ENCODE measurements at regions of chr9 and their contacts with region 1.

Region 1: DNA sequence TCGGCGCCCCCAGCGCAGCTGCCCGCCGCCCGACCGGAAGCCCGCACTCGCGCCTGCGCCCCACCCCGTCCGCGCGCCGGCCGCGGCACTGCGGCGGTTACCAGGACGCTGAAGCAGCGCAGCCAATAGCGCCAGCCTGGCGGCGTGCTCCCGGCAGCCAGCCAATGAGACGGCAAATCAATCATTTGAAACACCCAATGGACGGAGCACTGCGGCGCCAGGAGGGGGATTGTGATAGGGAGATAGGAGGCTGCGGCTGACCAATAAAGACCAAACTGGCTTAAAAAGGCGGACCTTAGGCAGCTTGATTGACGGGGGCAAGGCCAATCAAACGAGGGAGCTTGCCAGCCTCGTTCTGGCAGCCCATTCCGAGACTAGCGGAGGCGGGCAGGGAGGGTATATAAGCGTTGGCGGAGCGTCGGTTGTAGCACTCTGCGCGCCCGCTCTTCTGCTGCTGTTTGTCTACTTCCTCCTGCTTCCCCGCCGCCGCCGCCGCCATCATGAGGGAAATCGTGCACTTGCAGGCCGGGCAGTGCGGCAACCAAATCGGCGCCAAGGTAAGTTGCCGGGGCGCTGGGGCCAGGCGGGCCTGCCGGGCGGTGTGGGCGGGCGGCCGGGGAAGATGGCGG is at the start of gene TUBB4B:
- DNase-seq: peak; percentile 99 to 100
- ATAC-seq: peak; percentile 92 to 94
- H3K4me3 ChIP-seq: peak within 1 kb of the TSS; percentile 79 to 100 (median 85)
- H3K27ac ChIP-seq: peak within 1 kb of the TSS; percentile 93 to 98 (median 97)
- H3K4me1 ChIP-seq: peaks cover 60 to 77% of the 10 kb centered on the region in 2 donors
- H3K27me3 ChIP-seq: no peaks in the 10 kb centered on the region
- CTCF ChIP-seq: peak in 1 of 5 experiments; percentile 19
- POLR2A ChIP-seq: peak; percentile 100
- total RNA-seq, gene TUBB4B: 222 to 495 (median 363) TPM

Region 2: GRCh38 chr9:137114610-137115391 is 126.2 kb before region 1 on chr9 and contains the start of gene DPP7:
- in situ Hi-C with region 1: loop called in 2 of 4 experiments (anchors 10 kb)
- intact Hi-C with region 1: no loop called
- DNase-seq: peak; percentile 53 to 67
- ATAC-seq: peak; percentile 91 to 93
- H3K4me3 ChIP-seq: peak within 1 kb of the TSS; percentile 76 to 97 (median 92)
- H3K27ac ChIP-seq: peak within 1 kb of the TSS; percentile 50 to 72 (median 64)
- H3K4me1 ChIP-seq: peaks cover 6 to 9% of the 10 kb centered on the region in 2 donors
- H3K27me3 ChIP-seq: no peaks in the 10 kb centered on the region
- CTCF ChIP-seq: peak in 1 of 5 experiments; percentile 22
- POLR2A ChIP-seq: peak; percentile 51 to 52
- total RNA-seq, gene DPP7: 36.9 to 63.1 (median 55.9) TPM

Region 3: DNA sequence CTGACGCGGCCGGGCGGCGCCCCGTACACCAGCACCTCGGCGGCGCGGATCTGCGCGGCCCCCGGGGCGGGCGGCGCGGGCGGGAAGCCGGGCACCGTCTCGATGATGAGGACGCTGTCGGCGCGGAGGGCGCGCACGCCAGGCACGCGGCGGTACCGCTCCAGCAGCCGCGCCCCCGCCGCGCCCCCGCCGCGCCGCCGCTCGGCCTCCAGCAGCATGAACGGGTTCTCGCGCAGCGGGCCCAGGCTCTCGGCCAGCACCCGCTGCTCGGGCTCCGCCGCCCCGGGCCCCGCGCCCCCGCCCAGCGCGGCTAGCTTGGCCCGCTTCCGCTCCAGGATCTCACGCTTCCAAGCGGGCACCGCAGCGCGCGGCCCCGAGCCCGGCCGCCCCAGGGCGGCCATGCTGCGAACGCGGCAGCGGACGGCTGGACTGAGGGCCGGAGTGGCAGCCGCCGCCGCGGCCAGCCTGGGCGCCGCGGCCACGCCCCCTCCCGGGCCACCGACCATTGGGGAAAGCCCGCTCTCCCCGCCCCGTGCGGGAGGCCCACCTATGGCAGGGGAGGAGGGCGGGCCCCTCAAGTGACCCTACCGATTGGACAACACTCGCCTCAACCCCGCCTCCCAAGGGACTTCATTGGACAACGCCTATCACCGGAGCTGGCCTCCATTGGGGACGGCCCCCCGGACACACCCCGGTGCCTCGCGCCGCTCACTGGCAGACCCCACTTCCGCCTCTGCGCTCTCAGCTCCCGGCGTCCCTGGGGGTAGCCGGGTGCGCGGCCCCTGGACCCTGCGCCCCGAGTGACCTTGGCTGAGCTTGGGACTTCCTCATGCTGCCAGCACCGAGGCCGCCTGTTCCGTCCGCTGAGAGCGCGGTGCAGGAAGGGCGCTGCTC is 40.4 kb before region 1 on chr9 and contains the start of gene TPRN:
- in situ Hi-C with region 1: no loop called
- intact Hi-C with region 1: loop called (anchors 5 kb)
- DNase-seq: peak; percentile 100
- ATAC-seq: peak; percentile 97
- H3K4me3 ChIP-seq: peak within 1 kb of the TSS; percentile 73 to 86 (median 77)
- H3K27ac ChIP-seq: peak within 1 kb of the TSS; percentile 83 to 92 (median 86)
- H3K4me1 ChIP-seq: peaks cover 61 to 70% of the 10 kb centered on the region in 2 donors
- H3K27me3 ChIP-seq: no peaks in the 10 kb centered on the region
- CTCF ChIP-seq: peak in 2 of 5 experiments; percentile 6 to 22
- POLR2A ChIP-seq: peak; percentile 89 to 94
- total RNA-seq, gene TPRN: 3.4 to 10.2 (median 6.3) TPM

Region 4: GRCh38 chr9:137262909-137263285 is 21.9 kb after region 1 on chr9:
- in situ Hi-C with region 1: no loop called
- intact Hi-C with region 1: loop called (anchors 2 kb)
- DNase-seq: no peak
- ATAC-seq: no peak
- H3K4me3 ChIP-seq: no peak overlapping the region
- H3K27ac ChIP-seq: no peak overlapping the region
- H3K4me1 ChIP-seq: peaks cover 4 to 8% of the 10 kb centered on the region in 2 donors
- H3K27me3 ChIP-seq: no peaks in the 10 kb centered on the region
- CTCF ChIP-seq: no peak
- POLR2A ChIP-seq: no peak

Region 5: GRCh38 chr9:137411671-137412380 is 170.9 kb after region 1 on chr9:
- in situ Hi-C with region 1: no loop called
- intact Hi-C with region 1: no loop called
- DNase-seq: peak; percentile 43 to 60
- ATAC-seq: peak; percentile 64 to 65
- H3K4me3 ChIP-seq: peak overlapping the region in 1 of 4 donors; percentile 33
- H3K27ac ChIP-seq: peak overlapping the region; percentile 70 to 82 (median 80)
- H3K4me1 ChIP-seq: peaks cover 18 to 31% of the 10 kb centered on the region in 2 donors
- H3K27me3 ChIP-seq: no peaks in the 10 kb centered on the region
- CTCF ChIP-seq: no peak
- POLR2A ChIP-seq: no peak

Measured in gastrocnemius medialis (tissue), 4 donors.